MCF 10A (cell line): ENCODE measurements at regions of chr3 and their contacts with region 1.

Region 1: GRCh38 chr3:14124615-14125190 is at the starts of genes CHCHD4 and TMEM43:
- DNase-seq: peak; percentile 99
- H3K4me3 Mint-ChIP-seq: peak within 1 kb of the TSS; percentile 99
- H3K27ac Mint-ChIP-seq: peak within 1 kb of the TSS; percentile 96
- H3K4me1 Mint-ChIP-seq: peaks cover 30% of the 10 kb centered on the region
- H3K27me3 Mint-ChIP-seq: no peaks in the 10 kb centered on the region
- CTCF ChIP-seq: no peak
- total RNA-seq, gene CHCHD4: 31.6 and 35.0 TPM in 2 replicates
- total RNA-seq, gene TMEM43: 120 and 124 TPM in 2 replicates

Region 2: GRCh38 chr3:14113965-14114635 is 10.6 kb before region 1 on chr3:
- CTCF ChIA-PET with region 1: no interaction called
- POLR2A ChIA-PET with region 1: interaction called, 14 read pairs
- intact Hi-C with region 1: no loop called
- DNase-seq: no peak
- H3K4me3 Mint-ChIP-seq: no peak overlapping the region
- H3K27ac Mint-ChIP-seq: no peak overlapping the region
- H3K4me1 Mint-ChIP-seq: no peaks in the 10 kb centered on the region
- H3K27me3 Mint-ChIP-seq: no peaks in the 10 kb centered on the region
- CTCF ChIP-seq: peak; percentile 13

Region 3: DNA sequence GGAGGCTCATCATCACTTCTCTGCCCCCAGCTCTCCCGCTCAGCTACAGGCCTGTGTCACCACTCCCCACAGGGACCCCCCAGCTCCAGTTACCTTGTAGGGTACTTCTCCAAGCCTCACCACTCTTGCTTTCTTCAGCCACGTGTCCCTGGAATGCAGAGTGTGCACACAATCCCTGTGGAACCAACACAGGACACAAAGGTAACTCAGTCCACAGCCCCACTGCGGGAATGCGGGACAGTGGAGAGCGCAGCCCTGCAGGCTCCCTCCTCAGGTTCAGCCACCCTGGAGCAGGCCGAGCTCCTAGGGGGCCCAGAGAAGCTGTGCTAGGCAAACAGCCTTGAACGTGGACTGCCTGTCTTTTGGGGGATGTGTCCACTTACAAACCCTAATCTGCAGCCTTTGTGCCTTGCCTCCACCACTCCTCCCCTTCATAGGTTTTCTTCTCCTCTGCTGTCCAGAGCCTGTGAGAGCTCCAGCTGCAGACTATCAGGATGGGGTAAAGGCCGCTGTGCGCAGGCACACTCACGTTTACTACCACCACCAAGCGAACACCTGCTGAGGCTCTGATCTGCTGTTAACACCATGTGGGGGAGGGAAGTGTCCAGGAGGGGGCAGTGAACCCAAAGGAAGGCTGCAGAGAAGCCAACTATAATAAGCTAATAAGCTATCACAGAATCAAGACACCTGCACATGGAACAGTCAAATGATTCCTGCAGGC is 27.7 kb after region 1 on chr3:
- CTCF ChIA-PET with region 1: interaction called, 4 read pairs
- POLR2A ChIA-PET with region 1: interaction called, 294 read pairs
- intact Hi-C with region 1: no loop called
- DNase-seq: no peak
- H3K4me3 Mint-ChIP-seq: no peak overlapping the region
- H3K27ac Mint-ChIP-seq: peak overlapping the region; percentile 63
- H3K4me1 Mint-ChIP-seq: no peaks in the 10 kb centered on the region
- H3K27me3 Mint-ChIP-seq: no peaks in the 10 kb centered on the region
- CTCF ChIP-seq: no peak

Region 4: GRCh38 chr3:14170531-14171173 is 45.9 kb after region 1 on chr3:
- CTCF ChIA-PET with region 1: interaction called, 5 read pairs
- POLR2A ChIA-PET with region 1: interaction called, 77 read pairs
- intact Hi-C with region 1: loop called (anchors 1 kb)
- DNase-seq: no peak
- H3K4me3 Mint-ChIP-seq: peak overlapping the region; percentile 39
- H3K27ac Mint-ChIP-seq: peak overlapping the region; percentile 96
- H3K4me1 Mint-ChIP-seq: peaks cover 74% of the 10 kb centered on the region
- H3K27me3 Mint-ChIP-seq: no peaks in the 10 kb centered on the region
- CTCF ChIP-seq: no peak

Region 5: GRCh38 chr3:14508961-14509795 is 384.5 kb after region 1 on chr3:
- CTCF ChIA-PET with region 1: no interaction called
- POLR2A ChIA-PET with region 1: no interaction called
- intact Hi-C with region 1: no loop called
- DNase-seq: peak; percentile 56
- H3K4me3 Mint-ChIP-seq: no peak overlapping the region
- H3K27ac Mint-ChIP-seq: no peak overlapping the region
- H3K4me1 Mint-ChIP-seq: no peaks in the 10 kb centered on the region
- H3K27me3 Mint-ChIP-seq: no peaks in the 10 kb centered on the region
- CTCF ChIP-seq: peak; percentile 96